ENCODE measurements at regions of chr1 and their contacts with region 1.

Region 1: DNA sequence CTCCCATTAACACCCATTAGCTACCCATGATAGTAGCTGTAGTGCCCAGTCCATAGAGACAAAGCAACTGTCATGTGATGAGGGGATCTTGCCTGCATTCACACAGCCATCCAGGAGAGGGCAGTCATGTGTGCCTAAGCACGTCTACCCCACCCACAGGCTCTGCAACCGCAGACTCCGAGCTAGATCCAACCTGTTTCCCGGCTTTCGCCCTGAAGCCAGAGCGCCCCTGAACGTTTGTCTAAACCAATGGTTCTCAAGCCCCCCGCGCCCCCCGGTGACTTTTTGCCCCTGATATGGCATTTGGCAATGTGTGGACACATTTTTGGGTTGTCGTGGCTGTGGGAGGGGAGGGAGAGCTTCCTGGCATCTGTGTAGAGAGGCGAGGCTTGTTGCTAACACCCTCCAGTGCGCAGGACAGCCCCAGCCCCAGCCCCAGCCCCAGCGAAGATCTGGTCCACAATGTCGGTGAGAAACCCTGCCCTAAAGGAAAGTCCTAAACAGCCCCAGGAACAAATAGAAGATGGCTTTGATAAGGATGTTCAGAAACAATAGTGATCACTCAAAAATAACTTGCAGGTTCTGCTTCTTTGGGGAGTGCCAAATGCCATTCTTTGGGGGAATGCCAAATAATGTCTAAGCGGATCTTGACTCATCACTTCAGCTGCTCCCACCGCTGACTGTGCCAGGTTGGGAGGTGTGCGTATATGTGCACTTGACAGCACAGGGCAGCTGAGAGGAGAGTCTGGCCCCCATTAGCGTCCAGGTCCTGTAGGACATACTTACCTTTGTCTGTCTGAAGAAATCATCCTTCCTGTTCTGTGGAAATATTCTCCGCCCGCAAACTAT is 34.5 kb downstream of the SLC44A3 start:
- DNase-seq: peak; percentile 90
- ATAC-seq: peak; percentile 96 to 97
- H3K4me3 ChIP-seq: peak overlapping the region; percentile 47
- H3K27ac ChIP-seq: peak overlapping the region; percentile 75
- H3K4me1 ChIP-seq: peaks cover 22% of the 10 kb centered on the region
- H3K27me3 ChIP-seq: no peaks in the 10 kb centered on the region
- CTCF ChIP-seq: peak; percentile 92

Region 2: DNA sequence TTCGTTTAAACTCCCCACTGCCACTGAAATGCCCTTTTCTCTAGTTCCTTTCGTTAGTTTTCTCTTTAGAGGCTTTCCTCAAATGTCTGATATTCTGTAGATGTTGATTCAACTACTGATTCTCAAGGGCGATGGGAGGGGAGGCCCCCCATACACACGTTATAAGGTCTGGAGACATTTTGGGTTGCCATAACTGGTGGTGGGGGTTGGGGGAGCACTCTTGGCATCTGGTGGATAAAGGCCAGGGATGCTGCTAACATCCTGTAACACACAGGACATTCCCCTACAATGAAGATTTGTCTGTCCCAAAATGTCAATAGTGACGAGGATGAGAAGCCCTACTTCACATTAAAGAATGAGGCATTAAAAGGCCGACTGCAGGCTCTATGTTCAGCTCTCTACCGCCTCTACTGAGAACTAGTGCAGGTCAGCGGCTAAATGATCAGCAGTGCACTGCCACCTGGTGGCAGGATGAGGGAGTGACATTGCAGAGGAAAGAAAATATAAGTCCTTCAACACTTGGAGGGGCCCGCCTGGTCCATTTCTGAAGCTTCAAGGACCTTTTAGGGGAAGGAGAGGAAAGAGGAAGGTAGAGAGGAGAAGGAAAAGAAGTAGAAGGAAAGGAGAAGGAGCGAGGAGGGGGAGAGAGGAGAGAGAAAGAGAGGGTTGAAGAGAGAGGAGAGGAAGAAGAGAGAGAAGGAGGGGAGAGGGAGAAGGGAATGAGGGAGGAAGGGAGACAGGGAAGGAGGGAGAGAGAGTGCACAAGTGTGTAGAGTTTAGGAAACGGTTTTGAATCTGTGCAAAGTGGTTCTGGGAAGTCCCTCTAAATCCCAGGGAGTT is 188.7 kb after region 1 on chr1:
- intact Hi-C with region 1: loop called (anchors 5 kb)
- DNase-seq: peak; percentile 82
- ATAC-seq: peak; percentile 93 to 96
- H3K4me3 ChIP-seq: no peak overlapping the region
- H3K27ac ChIP-seq: no peak overlapping the region
- H3K4me1 ChIP-seq: peaks cover 19% of the 10 kb centered on the region
- H3K27me3 ChIP-seq: no peaks in the 10 kb centered on the region
- CTCF ChIP-seq: peak; percentile 97

Measured in lower lobe of right lung (tissue), 2 donors.